ENCODE measurements at regions of chr3 and their contacts with region 1.

Region 1: GRCh38 chr3:47781685-47782445 is at the start of gene SMARCC1:
- DNase-seq: peak; percentile 95 to 98 (median 98)
- H3K4me3 ChIP-seq: peak within 1 kb of the TSS; percentile 71 to 91
- H3K4me3 Mint-ChIP-seq: peak within 1 kb of the TSS; percentile 92 to 97 (median 94)
- H3K27ac ChIP-seq: peak within 1 kb of the TSS; percentile 96
- H3K27ac Mint-ChIP-seq: peak within 1 kb of the TSS; percentile 95 to 99 (median 99)
- H3K4me1 ChIP-seq: peaks cover 39% of the 10 kb centered on the region
- H3K4me1 Mint-ChIP-seq: peaks cover 16 to 33% (median 21%) of the 10 kb centered on the region in 4 donors
- H3K27me3 ChIP-seq: no peaks in the 10 kb centered on the region
- H3K27me3 Mint-ChIP-seq: no peaks in the 10 kb centered on the region
- total RNA-seq, gene SMARCC1: 85.7 to 101 TPM

Region 2: DNA sequence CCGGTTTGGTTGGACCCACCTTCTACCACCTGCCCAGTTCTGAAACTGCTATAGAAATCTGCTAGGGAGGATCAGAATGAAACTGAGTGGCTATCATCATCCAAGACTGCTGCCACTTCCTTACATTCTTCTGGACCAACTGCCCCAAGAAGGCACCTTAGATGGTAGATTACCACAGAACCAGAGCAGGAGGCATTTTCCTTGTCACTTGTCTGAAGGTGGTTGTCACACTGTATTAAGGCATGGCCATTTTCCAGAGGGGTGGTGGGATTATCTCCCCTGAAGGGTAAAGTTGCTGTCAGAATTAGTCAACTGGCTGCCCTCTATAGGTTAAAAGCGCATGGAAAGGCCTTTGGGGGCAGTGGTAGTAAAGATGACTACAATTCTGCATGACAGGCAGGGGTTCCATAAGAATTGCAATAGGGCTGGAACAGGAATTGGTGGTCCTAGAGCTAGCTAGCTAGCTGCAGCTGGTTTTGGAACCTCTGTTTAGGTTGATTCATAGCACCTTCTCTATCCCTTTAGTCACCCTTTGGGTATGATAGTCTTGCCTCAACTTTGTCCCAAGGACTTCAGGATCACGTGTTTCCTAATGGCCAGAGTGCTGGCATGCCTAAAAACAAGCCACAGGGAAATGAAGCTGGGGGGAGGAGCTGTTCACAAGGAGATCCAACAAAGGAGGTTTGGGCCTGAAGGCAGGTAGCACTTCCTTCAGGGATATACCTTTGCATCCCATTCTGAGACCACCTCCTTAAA is 198.4 kb before region 1 on chr3:
- CTCF ChIA-PET with region 1: no interaction called
- POLR2A ChIA-PET with region 1: no interaction called
- intact Hi-C with region 1: loop called (anchors 10 kb)
- DNase-seq: no peak
- H3K4me3 ChIP-seq: no peak overlapping the region
- H3K4me3 Mint-ChIP-seq: no peak overlapping the region
- H3K27ac ChIP-seq: no peak overlapping the region
- H3K27ac Mint-ChIP-seq: no peak overlapping the region
- H3K4me1 ChIP-seq: peaks cover 6% of the 10 kb centered on the region
- H3K4me1 Mint-ChIP-seq: peaks cover 0 to 8% (median under 1%) of the 10 kb centered on the region in 4 donors
- H3K27me3 ChIP-seq: peaks cover 9% of the 10 kb centered on the region
- H3K27me3 Mint-ChIP-seq: peaks cover 5 to 6% of the 10 kb centered on the region in 2 donors

Region 3: DNA sequence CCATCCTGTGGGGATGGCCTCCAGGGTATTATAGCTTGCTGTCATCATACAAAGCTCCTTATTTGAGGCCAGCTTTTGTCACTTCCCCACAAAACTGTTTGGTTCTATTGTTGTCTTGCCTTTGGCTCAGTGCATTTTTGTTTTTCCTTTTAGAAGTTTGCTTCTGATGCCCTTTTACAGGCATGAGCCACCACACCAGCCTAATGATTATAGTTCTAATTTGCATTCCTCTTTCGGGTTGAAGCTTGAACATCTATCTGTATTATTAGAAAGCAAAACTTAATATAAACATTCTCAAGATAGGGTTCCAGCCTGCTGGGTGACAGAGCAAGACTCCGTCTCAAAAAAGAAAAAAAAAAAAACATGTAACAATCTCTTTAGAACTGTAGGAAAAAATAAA is 39.9 kb before region 1 on chr3:
- CTCF ChIA-PET with region 1: no interaction called
- POLR2A ChIA-PET with region 1: no interaction called
- intact Hi-C with region 1: loop called (anchors 5 kb)
- DNase-seq: no peak
- H3K4me3 ChIP-seq: no peak overlapping the region
- H3K4me3 Mint-ChIP-seq: no peak overlapping the region
- H3K27ac ChIP-seq: no peak overlapping the region
- H3K27ac Mint-ChIP-seq: peak overlapping the region in 1 of 7 donors; percentile 23
- H3K4me1 ChIP-seq: no peaks in the 10 kb centered on the region
- H3K4me1 Mint-ChIP-seq: peaks cover 10 to 27% (median 13%) of the 10 kb centered on the region in 4 donors
- H3K27me3 ChIP-seq: no peaks in the 10 kb centered on the region
- H3K27me3 Mint-ChIP-seq: no peaks in the 10 kb centered on the region

Region 4: DNA sequence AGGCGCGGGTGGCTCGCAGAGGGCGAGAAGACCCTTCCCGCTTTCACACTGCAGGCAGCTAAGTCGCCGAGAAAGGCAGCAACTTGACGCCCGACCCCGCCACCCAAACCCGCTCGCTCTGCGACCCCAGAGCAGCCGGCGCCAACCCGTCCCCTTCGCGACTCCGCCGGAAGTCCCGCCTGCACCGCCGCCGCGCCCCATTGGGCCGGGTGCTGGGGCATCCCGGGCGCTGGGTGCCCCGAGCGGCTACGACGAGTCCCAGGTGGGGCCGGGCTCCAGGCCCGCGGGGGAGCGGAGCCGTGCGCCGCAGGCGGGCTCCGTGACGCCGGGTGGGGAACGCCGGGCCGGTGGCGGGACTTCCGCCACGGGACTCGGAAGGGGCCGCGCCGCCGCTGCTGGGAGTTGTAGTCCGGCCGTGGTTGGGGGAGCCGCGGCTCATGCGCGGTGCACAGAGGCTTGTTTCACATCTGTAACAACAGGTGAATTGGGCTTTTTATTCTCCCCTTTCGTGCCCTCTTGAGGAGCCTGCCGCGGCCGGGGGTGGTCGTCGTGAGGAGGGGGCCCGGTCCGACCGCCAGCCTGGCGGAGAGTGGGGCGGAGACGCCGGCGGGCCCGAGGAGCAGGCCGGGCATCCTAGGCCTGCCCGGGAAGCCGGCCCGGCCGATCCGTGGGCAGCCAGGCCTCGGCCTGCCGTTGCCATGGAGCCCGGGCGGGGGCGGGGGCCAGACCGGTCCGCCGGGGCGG is 21.0 kb after region 1 on chr3 and contains the start of gene DHX30:
- CTCF ChIA-PET with region 1: no interaction called
- POLR2A ChIA-PET with region 1: interaction called, 8 read pairs
- intact Hi-C with region 1: loop called (anchors 1 kb)
- DNase-seq: peak; percentile 81 to 90 (median 84)
- H3K4me3 ChIP-seq: peak within 1 kb of the TSS; percentile 95 to 97
- H3K4me3 Mint-ChIP-seq: peak within 1 kb of the TSS; percentile 93 to 97 (median 95)
- H3K27ac ChIP-seq: peak within 1 kb of the TSS; percentile 90
- H3K27ac Mint-ChIP-seq: peak within 1 kb of the TSS; percentile 91 to 98 (median 97)
- H3K4me1 ChIP-seq: peaks cover 27% of the 10 kb centered on the region
- H3K4me1 Mint-ChIP-seq: peaks cover 15 to 27% (median 22%) of the 10 kb centered on the region in 4 donors
- H3K27me3 ChIP-seq: no peaks in the 10 kb centered on the region
- H3K27me3 Mint-ChIP-seq: no peaks in the 10 kb centered on the region
- total RNA-seq, gene DHX30: 86.5 to 93.0 TPM

Measured in CD4-positive, alpha-beta memory T cell (primary cell).